ENCODE measurements at regions of chr15 and their contacts with region 1.

Region 1: GRCh38 chr15:91049378-91050127 is 27.2 kb upstream of the VPS33B start:
- DNase-seq: peak; percentile 83
- H3K4me3 Mint-ChIP-seq: no peak overlapping the region
- H3K27ac Mint-ChIP-seq: no peak overlapping the region
- H3K4me1 Mint-ChIP-seq: peaks cover 19% of the 10 kb centered on the region
- H3K27me3 Mint-ChIP-seq: no peaks in the 10 kb centered on the region

Region 2: GRCh38 chr15:90750186-90750585 is 299.4 kb before region 1 on chr15:
- CTCF ChIA-PET with region 1: no interaction called
- intact Hi-C with region 1: no loop called
- DNase-seq: peak; percentile 38
- H3K4me3 Mint-ChIP-seq: peak overlapping the region; percentile 21
- H3K27ac Mint-ChIP-seq: peak overlapping the region; percentile 84
- H3K4me1 Mint-ChIP-seq: peaks cover 29% of the 10 kb centered on the region
- H3K27me3 Mint-ChIP-seq: no peaks in the 10 kb centered on the region

Region 3: GRCh38 chr15:91032919-91033803 is 16.4 kb before region 1 on chr15:
- CTCF ChIA-PET with region 1: interaction called, 14 read pairs
- intact Hi-C with region 1: no loop called
- DNase-seq: peak; percentile 79
- H3K4me3 Mint-ChIP-seq: no peak overlapping the region
- H3K27ac Mint-ChIP-seq: no peak overlapping the region
- H3K4me1 Mint-ChIP-seq: no peaks in the 10 kb centered on the region
- H3K27me3 Mint-ChIP-seq: no peaks in the 10 kb centered on the region

Region 4: DNA sequence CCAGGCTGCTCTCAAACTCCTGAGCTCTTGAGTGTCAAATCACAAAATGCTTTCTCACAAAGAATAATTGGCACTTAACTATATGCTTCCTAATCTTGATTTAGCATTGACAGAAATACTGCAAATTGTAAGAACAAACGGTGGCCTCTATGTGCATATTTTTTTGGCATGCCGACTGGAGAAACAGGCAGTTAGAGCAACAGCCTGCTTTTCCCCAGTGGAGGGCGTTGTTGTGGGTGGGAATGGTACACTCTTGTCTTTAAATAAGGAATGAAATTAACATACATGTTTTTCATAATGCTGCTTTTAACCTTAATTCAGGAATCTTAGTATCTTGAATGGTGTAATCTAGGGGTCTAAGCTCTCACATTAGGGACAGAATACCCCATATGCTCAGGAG is 19.4 kb after region 1 on chr15:
- CTCF ChIA-PET with region 1: no interaction called
- intact Hi-C with region 1: no loop called
- DNase-seq: no peak
- H3K4me3 Mint-ChIP-seq: no peak overlapping the region
- H3K27ac Mint-ChIP-seq: no peak overlapping the region
- H3K4me1 Mint-ChIP-seq: no peaks in the 10 kb centered on the region
- H3K27me3 Mint-ChIP-seq: peaks cover 6% of the 10 kb centered on the region